ENCODE measurements at regions of chr12 and their contacts with region 1.

Region 1: DNA sequence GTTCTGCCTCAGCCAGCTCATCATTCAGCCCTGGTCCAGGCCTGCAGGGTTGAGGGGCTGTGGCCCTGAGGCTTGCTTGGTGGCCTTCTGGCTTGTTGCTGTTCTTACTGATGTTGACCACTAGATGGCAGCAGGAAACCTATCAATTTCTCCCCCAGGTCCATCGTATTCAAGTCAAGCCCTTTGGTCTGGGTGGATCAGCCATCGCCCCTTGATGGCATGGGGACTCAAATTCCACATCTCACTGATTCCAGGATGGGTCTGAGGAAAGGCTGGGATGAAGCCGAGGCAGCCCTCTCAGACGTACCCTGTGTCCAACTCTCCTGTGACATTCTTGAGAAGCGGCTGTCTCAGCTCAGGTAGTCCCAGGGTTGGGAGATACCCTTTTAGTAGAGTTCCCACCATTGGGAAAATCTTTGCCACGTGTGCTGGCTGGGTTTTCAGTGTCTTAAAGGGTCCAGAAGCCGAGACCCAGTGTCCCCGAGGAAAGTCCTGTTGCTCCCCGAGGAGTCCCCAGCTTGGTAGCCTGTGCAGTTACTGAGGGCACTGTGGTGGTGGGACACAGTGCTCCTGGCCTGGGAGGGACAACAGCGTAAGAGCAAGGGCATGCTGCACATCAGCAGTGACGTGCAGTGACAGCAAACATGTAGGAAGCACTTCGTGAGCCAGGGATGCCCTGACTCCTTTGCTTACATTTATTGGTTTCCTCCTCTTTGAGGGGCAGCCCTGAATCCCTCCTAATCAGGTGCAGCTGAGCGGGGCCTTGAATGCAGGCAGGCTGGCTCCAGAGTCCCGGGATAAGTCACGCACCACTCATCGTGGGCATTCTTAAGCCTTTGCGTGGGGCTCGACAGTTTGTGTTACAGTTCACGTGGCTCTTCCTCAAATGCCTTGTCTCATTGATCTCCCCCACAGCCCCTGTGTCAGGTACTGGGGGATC is 58.6 kb downstream of the TSPAN9 start:
- DNase-seq: no peak
- H3K4me3 ChIP-seq: no peak overlapping the region
- CTCF ChIP-seq: peak; percentile 75

Region 2: GRCh38 chr12:2998789-2999264 is 137.0 kb before region 1 on chr12:
- CTCF ChIA-PET with region 1: no interaction called
- POLR2A ChIA-PET with region 1: no interaction called
- DNase-seq: peak; percentile 34
- H3K4me3 ChIP-seq: no peak overlapping the region
- CTCF ChIP-seq: no peak

Region 3: DNA sequence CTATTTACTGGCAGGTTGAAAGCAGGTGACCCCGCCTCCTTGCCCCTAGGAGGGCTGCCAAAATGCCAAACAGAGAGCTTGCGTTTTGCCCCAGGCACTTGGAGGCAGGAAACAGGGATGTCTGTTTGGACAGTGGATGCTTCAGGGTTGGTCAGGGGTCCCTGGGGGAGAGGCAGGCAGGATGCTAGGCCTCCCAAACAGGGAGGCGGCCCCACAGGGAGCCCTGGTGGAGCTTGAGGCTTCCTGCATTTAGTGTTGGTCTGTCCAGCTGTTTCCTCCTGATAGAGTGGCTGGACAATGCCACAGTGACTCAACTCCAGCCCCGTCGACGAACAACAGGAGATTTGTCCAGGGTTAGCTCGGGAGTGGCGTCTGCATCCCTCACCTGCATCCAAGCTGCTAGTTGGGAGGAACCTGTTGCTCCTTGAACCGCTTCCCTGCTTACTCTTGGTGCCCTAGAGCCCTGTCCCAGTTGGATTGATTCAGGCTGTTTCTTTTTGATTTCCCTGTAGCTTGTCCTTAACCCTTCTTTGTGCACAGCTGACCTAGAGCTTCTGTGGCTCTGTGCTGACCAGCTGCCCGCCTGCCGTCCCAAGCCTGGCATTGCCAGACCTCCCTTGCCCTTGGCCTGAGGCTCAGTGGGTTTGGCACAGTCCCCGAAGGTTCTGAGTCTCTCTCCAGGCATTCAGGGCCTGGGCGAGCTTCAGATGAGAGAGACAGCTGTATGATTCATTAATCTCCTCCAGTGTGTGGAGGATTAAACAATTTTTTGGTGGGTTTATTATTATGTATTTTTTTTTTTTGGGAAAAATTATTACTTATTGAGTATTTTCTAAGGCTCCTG is 12.7 kb before region 1 on chr12:
- CTCF ChIA-PET with region 1: interaction called, 35 read pairs
- POLR2A ChIA-PET with region 1: no interaction called
- DNase-seq: no peak
- H3K4me3 ChIP-seq: no peak overlapping the region
- CTCF ChIP-seq: no peak

Region 4: GRCh38 chr12:3168223-3169221 is 32.7 kb after region 1 on chr12:
- CTCF ChIA-PET with region 1: interaction called, 26 read pairs
- POLR2A ChIA-PET with region 1: no interaction called
- DNase-seq: peak; percentile 79
- H3K4me3 ChIP-seq: no peak overlapping the region; the same call in 1 of the 2 replicates
- CTCF ChIP-seq: no peak

Region 5: GRCh38 chr12:3231399-3231876 is 95.6 kb after region 1 on chr12:
- CTCF ChIA-PET with region 1: interaction called, 18 read pairs
- POLR2A ChIA-PET with region 1: no interaction called
- DNase-seq: no peak
- H3K4me3 ChIP-seq: no peak overlapping the region
- CTCF ChIP-seq: no peak

Region 6: DNA sequence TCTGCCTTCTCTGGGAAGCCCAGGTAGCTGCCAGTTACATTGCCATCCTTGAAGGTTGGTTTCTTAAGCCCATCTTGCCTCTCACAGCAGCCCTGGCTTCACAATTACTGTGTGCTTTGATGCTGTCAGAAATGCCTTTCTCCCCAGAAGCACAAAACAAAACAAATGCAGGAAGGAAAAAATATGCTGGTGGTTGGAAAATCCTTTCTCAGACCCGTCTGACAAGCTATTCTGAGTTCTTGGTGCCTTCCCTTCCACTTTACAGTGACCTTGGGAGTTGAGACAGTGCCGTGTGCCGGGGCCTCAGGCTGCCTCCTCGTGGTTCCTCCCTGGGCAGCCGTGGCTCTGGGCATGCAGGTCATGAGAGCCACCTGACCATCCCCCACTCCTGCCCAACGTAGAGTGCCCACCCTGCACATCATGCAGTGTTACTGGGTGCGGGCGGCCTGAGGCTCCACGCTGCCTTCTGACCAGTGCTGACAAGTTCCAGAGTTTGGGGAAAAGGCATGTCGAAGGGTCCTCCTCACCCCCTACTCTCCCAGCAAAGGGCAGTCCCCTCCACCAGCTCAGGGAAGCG is 131.8 kb after region 1 on chr12:
- CTCF ChIA-PET with region 1: interaction called, 534 read pairs
- POLR2A ChIA-PET with region 1: no interaction called
- DNase-seq: no peak
- H3K4me3 ChIP-seq: no peak overlapping the region
- CTCF ChIP-seq: no peak

Measured in AG04449 (cell line).